GM10248 (cell line): ENCODE measurements at regions of chr16 and their contacts with region 1.

Region 1: GRCh38 chr16:8596581-8596980 is 6.3 kb upstream of the TMEM114 start:
- DNase-seq: no peak
- CTCF ChIP-seq: no peak

Region 2: DNA sequence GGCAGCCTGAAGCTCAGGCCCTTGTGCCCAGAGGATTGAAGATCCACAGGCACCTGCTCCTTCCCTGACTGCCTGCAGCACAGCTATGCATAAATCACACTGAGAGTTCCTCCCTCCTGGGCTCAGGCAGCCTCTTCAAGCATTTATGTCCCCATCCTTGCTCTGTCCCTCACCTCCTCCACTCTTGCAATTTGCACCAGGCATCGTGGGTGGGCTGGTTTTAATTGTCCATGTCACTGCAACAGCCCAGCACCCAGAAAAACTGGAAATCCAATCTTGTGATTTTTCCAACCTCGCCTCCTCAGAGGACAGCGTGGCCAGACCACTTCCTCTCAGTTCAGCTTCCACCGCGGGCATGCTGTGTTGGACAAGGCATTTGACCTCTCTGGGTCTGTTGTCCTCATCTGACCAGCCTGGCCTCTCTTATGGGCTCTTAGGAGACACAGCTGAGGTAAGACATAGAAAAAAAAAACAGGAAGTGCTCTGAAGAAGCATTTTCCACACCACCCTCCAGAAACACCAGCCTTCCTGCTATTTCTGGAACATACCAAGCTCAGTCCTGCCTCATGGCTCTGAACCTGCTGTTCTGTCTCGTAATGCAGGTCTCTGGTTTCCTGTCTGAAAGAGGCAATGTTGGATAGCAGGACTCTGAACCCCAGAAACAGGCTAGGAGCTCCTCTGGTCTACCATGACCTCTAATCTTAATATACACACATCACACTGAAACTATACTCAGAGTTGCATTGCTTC is 14.6 kb before region 1 on chr16:
- CTCF ChIA-PET with region 1: interaction called, 14 read pairs
- POLR2A ChIA-PET with region 1: no interaction called
- DNase-seq: no peak
- CTCF ChIP-seq: no peak

Region 3: GRCh38 chr16:8626946-8627345 is 30.4 kb after region 1 on chr16:
- CTCF ChIA-PET with region 1: no interaction called
- POLR2A ChIA-PET with region 1: no interaction called
- DNase-seq: no peak
- CTCF ChIP-seq: no peak